Cardiac septum (tissue), 1 donor: ENCODE measurements at regions of chr2 and their contacts with region 1.

Region 1: GRCh38 chr2:207529330-207530159 is at the start of gene CREB1:
- DNase-seq: peak; percentile 100
- total RNA-seq, gene CREB1: 46.9 TPM

Region 2: DNA sequence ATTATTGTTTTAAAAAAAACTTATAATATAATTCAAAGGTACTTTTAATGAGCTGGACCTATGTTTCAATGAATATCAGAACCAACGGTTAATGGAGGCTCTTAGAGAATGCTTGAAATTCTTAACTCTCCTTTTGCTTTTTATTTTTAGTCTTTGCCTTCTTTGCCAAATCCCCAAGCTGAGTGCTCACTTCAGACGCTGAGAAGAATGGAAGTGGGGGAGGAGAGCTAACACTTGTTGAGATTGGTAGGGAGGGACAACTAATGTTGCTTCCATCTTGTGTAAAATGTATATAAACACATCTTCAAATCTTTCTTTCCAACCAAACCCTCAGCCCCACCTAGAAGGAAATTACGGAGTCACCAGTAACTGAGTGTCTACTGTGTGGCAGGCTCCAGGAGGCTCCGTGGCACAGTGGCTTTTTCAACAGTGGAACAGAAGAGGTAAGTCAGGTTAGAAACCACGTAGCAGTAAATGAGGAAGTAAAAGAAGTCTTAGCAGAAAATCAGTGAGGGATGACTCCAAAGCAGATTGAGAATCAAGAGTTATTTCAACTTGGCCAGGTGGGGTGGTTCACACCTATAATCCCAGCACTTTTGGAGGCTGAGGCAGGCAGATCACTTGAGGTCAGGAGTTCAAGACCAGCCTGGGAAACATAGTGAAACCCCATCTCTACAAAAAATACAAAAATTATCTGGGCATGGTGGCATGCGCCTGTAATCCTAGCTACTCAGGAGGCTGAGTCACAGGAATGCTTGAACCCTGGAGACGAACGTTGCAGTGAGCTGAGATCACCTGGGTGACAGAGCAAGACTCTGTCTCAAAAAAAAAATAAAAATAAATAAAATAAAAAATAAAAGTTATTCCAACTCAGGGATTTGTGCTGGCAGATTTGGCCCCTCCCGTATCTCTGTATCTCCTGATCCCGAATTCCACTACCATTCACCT is 44.8 kb before region 1 on chr2:
- intact Hi-C with region 1: loop called (anchors 5 kb)
- DNase-seq: no peak

Region 3: GRCh38 chr2:207546822-207547221 is 17.3 kb after region 1 on chr2:
- intact Hi-C with region 1: loop called (anchors 1 kb)
- DNase-seq: no peak

Region 4: GRCh38 chr2:207561386-207562080 is 32.0 kb after region 1 on chr2:
- intact Hi-C with region 1: no loop called
- DNase-seq: no peak

Region 5: DNA sequence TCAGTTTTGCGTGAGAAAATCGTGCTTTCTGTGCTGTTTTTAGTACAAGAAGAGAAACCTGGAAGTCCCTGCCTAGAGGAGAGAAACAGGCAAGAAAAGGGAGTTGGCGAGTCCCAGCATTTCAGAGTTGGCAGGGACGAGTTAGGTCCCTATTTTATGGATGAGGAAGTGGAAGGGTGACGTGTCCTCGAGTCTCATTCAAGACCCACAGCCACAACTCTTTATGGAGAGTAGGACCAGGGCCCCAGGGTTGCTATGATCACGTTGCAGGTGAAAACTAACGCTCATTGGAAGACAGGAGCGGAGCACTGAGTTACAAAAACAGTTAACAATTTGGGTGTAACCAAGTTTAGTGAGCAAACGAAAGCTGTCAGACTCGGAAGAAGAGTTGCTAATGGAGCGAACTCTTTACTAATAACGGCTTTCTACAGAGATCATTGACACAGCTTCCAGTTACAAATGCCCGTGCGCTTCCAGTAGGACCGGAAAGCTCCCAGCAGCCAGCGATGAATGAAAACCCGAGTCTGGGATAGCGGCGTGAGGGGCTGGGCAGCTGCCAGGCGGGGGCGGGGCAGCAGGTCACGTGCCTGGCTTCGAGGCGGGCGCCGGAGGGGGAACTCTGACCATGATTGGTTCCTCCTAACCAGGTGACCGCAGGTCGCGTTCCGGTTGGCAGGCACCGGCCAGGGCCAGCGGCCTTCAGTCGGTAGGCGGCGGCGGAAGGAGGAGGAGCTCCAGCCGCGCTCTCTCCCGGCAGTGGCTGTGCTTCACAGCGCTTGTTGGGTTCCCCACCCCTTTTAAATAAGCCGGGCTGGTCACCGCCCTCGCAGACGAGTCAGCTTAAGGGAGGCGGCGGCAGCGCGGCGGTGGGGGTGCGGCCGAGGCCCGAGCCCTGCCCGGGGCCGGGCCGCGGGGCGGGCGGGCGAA is 181.5 kb after region 1 on chr2 and contains the start of gene CCNYL1:
- intact Hi-C with region 1: loop called (anchors 5 kb)
- DNase-seq: peak; percentile 100
- total RNA-seq, gene CCNYL1: 12.0 TPM

Region 6: GRCh38 chr2:208046686-208047085 is 517.1 kb after region 1 on chr2:
- intact Hi-C with region 1: no loop called
- DNase-seq: no peak